Body of pancreas (tissue), 4 donors: ENCODE measurements at regions of chr4 and their contacts with region 1.

Region 1: GRCh38 chr4:3572363-3572762 is 40.1 kb upstream of the LRPAP1 start:
- DNase-seq: no peak
- ATAC-seq: no peak
- H3K4me3 ChIP-seq: no peak overlapping the region
- H3K27ac ChIP-seq: no peak overlapping the region
- H3K4me1 ChIP-seq: no peaks in the 10 kb centered on the region
- H3K27me3 ChIP-seq: no peaks in the 10 kb centered on the region
- CTCF ChIP-seq: no peak
- POLR2A ChIP-seq: no peak

Region 2: DNA sequence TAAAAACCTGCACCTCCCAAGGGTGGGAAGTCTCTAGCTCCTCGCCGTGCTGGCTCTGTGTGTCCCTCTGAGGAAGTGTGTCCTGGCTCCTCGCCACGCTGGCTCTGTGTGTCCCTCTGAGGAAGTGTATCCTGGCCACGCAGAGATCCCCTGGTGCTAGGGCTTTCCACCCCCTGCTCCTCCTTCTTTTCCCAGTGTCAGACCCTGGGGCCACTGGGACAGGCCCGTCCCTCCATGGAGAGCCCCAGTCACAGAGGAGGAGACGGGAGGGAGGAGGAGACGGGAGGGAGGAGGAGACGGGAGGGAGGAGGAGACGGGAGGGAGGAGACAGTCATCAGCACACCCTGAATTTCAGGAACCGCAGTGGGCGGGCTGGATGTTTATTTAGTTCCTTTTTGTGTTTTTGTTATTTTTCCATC is 184.4 kb before region 1 on chr4:
- intact Hi-C with region 1: no loop called
- DNase-seq: peak; percentile 41 to 79 (median 60)
- ATAC-seq: peak; percentile 13
- H3K4me3 ChIP-seq: no peak overlapping the region
- H3K27ac ChIP-seq: peak overlapping the region in 2 of 4 donors; percentile 1 to 75
- H3K4me1 ChIP-seq: peaks cover 23% of the 10 kb centered on the region
- H3K27me3 ChIP-seq: no peaks in the 10 kb centered on the region
- CTCF ChIP-seq: no peak
- POLR2A ChIP-seq: peak in 1 of 3 donors; percentile 31

Region 3: GRCh38 chr4:3497523-3498389 is 74.6 kb before region 1 on chr4:
- intact Hi-C with region 1: no loop called
- DNase-seq: no peak
- ATAC-seq: no peak
- H3K4me3 ChIP-seq: no peak overlapping the region
- H3K27ac ChIP-seq: no peak overlapping the region
- H3K4me1 ChIP-seq: no peaks in the 10 kb centered on the region
- H3K27me3 ChIP-seq: no peaks in the 10 kb centered on the region
- CTCF ChIP-seq: no peak
- POLR2A ChIP-seq: no peak

Region 4: DNA sequence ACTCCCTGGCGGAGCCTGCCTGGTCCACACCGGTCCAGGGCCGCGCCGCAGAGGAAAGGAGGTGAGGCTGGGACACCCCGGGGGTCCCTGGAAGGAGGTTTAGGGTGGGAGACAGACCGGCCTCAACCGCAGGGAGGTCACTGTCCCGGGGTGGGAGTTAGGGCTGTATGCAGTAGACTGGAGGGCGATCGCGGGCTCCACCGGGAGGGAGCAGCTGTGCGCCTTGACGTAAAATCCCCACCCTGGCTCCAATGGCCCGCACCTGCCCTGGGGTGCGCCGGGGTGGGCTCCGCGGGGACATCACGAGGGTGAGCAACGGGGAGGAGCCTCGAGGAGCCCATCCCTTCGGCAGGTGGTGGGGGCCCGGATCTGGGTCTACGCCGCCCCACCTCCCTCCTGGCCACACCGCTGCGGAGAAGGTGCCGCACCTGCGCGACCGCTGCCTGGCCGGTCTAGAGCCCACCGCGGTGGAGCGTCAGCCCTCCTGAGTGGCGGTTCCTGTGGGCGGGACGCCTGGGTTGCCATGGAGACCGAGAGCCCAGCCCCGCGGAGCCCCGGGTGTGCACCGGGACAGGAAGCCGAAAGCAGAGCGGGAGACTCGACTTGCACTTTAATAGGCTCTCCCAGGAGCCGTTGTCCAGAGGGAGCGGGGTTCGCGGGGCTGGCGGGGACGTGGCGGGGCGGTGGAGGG is 299.0 kb after region 1 on chr4:
- intact Hi-C with region 1: loop called (anchors 10 kb)
- DNase-seq: peak in 3 of 4 donors; percentile 25 to 52 (median 30)
- ATAC-seq: no peak
- H3K4me3 ChIP-seq: no peak overlapping the region
- H3K27ac ChIP-seq: no peak overlapping the region
- H3K4me1 ChIP-seq: no peaks in the 10 kb centered on the region
- H3K27me3 ChIP-seq: peaks cover 0 to 7% of the 10 kb centered on the region in 2 donors
- CTCF ChIP-seq: no peak
- POLR2A ChIP-seq: no peak